ENCODE measurements at regions of chr15 and their contacts with region 1.

Region 1: DNA sequence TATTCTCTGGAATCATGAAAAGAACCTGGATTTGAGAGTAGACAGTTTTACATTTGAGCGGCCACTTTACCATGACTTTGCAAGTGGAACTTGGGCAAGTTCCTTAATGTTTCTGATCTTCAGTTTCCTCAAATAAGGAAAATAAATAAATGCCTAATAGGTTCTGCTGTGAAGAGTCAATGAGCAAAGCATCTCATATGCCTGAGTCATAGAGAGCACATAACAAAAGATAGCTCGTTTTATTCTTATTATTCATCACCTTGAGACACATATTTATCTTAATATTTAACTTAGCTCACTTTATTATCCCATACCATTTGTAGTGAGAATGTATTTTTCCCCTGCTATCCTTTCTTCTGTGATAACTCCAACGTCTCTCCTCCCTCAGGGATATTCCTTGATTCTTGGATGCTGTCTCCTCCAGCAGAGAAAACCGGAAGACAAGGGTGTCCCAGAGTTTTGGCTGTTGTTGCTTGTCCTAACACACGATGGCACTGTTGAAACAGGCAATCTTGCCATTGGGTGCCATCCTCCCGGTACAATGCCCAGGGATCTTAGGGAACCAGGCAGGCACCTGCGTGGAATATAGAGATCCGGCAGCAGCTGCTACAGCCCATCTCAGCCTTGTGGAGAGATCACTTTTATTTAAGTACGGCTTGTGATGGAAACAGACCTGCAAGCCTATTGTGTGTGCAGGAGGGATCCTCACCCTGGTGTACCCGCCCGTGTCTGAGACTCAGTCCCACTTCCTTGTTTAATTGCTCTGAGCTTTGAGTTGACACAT is 33.3 kb upstream of the VPS33B start:
- DNase-seq: peak; percentile 24
- H3K4me3 ChIP-seq: no peak overlapping the region
- H3K27ac ChIP-seq: no peak overlapping the region
- H3K4me1 ChIP-seq: peaks cover 5% of the 10 kb centered on the region
- H3K27me3 ChIP-seq: peaks cover 70% of the 10 kb centered on the region
- CTCF ChIP-seq: peak; percentile 84

Region 2: DNA sequence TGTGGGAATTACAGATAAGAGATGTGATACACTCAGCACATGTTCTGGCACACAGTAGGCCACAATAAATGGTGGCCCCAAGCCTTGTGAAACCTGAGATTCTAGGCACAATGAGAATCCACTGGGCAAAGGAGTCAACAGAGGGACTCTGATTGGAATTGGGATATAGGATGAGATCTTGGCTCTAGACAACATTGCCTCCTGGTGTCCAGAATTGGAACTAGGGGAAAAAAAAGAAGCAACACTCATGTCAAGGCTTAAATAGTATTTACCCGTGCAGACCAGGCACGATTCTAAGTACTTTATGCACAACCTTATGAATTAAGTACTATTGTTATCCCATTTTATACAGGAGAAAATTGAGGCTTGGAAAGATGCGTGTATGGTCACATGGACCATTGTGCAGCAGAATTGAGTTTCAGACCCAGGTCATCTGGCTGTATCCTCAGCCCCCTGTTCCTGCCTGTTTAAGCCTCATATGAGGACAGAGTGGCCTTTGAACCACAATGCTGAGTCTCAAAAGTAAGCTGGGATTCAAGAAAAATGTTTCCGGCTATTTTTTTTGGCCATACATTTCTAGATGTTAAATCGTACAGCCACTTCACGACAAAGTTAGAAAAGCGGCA is 169.1 kb after region 1 on chr15:
- intact Hi-C with region 1: loop called (anchors 5 kb)
- DNase-seq: no peak
- H3K4me3 ChIP-seq: no peak overlapping the region
- H3K27ac ChIP-seq: no peak overlapping the region
- H3K4me1 ChIP-seq: peaks cover 8% of the 10 kb centered on the region
- H3K27me3 ChIP-seq: no peaks in the 10 kb centered on the region
- CTCF ChIP-seq: peak; percentile 77

Region 3: DNA sequence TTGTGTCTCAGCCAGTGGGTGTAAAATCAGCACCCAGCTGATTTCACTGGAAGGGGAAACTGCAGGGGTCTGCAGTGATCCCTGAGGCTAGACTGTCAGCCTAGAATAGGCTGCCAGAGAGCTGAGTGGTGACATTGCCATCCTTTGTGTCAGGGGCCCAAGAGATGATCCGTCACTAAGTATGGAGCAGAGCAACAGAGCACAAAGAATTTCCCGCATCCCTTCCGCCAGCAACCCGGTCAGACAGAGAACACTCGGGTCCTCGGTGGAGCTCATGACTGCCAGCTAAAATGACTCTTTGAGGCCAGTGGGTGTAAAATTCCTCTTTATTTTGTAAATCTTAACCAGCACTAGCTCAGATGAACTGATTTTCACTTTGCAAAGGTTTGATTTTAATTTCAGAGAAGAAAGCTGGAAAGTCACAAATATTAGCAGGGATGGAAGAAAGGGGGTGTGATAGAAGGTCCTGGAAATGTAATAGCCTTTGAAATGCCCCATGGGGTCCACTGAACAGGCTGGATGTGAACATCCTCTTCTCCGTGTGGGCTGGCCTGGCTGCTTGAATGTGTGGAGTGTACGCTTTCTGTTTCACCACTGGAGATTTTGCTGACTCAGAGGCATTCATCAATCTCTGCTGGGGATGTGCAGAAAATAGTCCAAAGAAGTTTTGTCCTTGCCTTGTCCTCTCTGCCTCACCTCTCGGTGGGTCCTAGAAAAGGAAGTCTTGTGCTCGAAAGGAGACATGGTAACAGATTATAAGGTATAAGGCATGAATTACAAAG is 183.1 kb after region 1 on chr15:
- intact Hi-C with region 1: loop called (anchors 5 kb)
- DNase-seq: no peak
- H3K4me3 ChIP-seq: no peak overlapping the region
- H3K27ac ChIP-seq: no peak overlapping the region
- H3K4me1 ChIP-seq: no peaks in the 10 kb centered on the region
- H3K27me3 ChIP-seq: no peaks in the 10 kb centered on the region
- CTCF ChIP-seq: no peak

Region 4: GRCh38 chr15:91271565-91272153 is 215.9 kb after region 1 on chr15:
- intact Hi-C with region 1: loop called (anchors 5 kb)
- DNase-seq: no peak
- H3K4me3 ChIP-seq: no peak overlapping the region
- H3K27ac ChIP-seq: no peak overlapping the region
- H3K4me1 ChIP-seq: no peaks in the 10 kb centered on the region
- H3K27me3 ChIP-seq: no peaks in the 10 kb centered on the region
- CTCF ChIP-seq: peak; percentile 85

Region 5: DNA sequence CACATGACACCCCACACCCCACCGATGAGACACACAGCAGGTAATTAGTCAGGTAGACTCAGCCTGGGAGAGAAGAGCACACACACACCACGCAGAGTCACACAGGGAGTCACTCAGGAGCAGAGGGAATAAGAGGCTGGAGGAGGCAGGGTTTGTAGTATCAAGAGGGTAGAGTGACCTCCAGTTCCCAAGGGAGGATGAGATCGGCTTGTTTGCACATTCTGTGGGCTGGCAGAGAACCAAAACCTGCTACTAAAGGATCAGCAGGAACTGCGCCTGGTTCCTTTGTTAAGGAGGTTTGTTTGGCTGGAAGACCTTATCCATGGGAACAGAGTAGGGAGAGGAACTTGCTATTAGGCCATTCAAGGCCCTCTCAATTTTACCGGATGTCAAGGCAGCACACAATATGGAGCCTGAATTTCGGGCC is 516.4 kb after region 1 on chr15:
- intact Hi-C with region 1: no loop called
- DNase-seq: no peak
- H3K4me3 ChIP-seq: no peak overlapping the region
- H3K27ac ChIP-seq: no peak overlapping the region
- H3K4me1 ChIP-seq: no peaks in the 10 kb centered on the region
- H3K27me3 ChIP-seq: no peaks in the 10 kb centered on the region
- CTCF ChIP-seq: no peak